Naive thymus-derived CD4-positive, alpha-beta T cell (primary cell): ENCODE measurements at regions of chr1 and their contacts with region 1.

Region 1: DNA sequence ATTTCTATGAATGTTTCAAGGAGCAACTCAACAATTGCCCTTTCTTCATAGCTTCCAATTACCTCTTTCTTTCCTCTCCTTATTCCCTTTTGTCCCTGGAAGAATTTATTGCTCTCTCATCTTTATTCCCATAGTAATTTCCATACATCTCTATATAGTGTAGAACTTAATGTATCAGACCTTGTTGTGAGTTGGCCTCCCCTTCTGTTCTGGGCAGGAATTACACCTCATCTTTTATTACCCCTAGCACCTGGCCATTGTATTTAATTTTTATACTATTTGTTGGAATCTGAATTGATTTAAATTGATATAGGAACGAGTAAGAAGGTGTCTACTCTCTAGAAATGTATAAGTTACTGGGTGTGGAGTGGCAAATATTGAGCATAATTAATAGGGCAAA is 114.5 kb downstream of the CACHD1 start:
- DNase-seq: no peak
- ATAC-seq: no peak
- H3K4me3 ChIP-seq: no peak overlapping the region
- H3K4me3 Mint-ChIP-seq: no peak overlapping the region
- H3K27ac ChIP-seq: no peak overlapping the region
- H3K27ac Mint-ChIP-seq: peak overlapping the region in 1 of 9 donors; percentile 11
- H3K4me1 ChIP-seq: peaks cover 0 to 7% of the 10 kb centered on the region in 2 donors
- H3K4me1 Mint-ChIP-seq: peaks cover 3 to 22% (median 12%) of the 10 kb centered on the region in 7 donors
- H3K27me3 ChIP-seq: no peaks in the 10 kb centered on the region
- H3K27me3 Mint-ChIP-seq: peaks cover 0 to 3% (median 0%) of the 10 kb centered on the region in 5 donors

Region 2: GRCh38 chr1:64268653-64269557 is 315.6 kb before region 1 on chr1:
- CTCF ChIA-PET with region 1: no interaction called
- POLR2A ChIA-PET with region 1: no interaction called
- intact Hi-C with region 1: loop called in 1 of 2 experiments (anchors 1 kb)
- DNase-seq: peak; percentile 30 to 74 (median 62)
- ATAC-seq: peak; percentile 75
- H3K4me3 ChIP-seq: no peak overlapping the region
- H3K4me3 Mint-ChIP-seq: no peak overlapping the region
- H3K27ac ChIP-seq: no peak overlapping the region
- H3K27ac Mint-ChIP-seq: no peak overlapping the region
- H3K4me1 ChIP-seq: no peaks in the 10 kb centered on the region
- H3K4me1 Mint-ChIP-seq: no peaks in the 10 kb centered on the region
- H3K27me3 ChIP-seq: no peaks in the 10 kb centered on the region
- H3K27me3 Mint-ChIP-seq: peaks cover 3 to 18% (median 10%) of the 10 kb centered on the region in 5 donors

Region 3: GRCh38 chr1:64499966-64500365 is 84.5 kb before region 1 on chr1:
- CTCF ChIA-PET with region 1: interaction called, 5 read pairs
- POLR2A ChIA-PET with region 1: no interaction called
- intact Hi-C with region 1: loop called in 1 of 2 experiments (anchors 5 kb)
- DNase-seq: peak in 4 of 9 donors; percentile 16 to 38 (median 32)
- ATAC-seq: peak; percentile 57
- H3K4me3 ChIP-seq: no peak overlapping the region
- H3K4me3 Mint-ChIP-seq: no peak overlapping the region
- H3K27ac ChIP-seq: no peak overlapping the region
- H3K27ac Mint-ChIP-seq: peak overlapping the region in 1 of 9 donors; percentile 1
- H3K4me1 ChIP-seq: peaks cover 0 to 5% of the 10 kb centered on the region in 2 donors
- H3K4me1 Mint-ChIP-seq: peaks cover 0 to 75% (median 13%) of the 10 kb centered on the region in 7 donors
- H3K27me3 ChIP-seq: no peaks in the 10 kb centered on the region
- H3K27me3 Mint-ChIP-seq: peaks cover 0 to 16% (median 3%) of the 10 kb centered on the region in 5 donors